B cell (primary cell): ENCODE measurements at regions of chr12 and their contacts with region 1.

Region 1: GRCh38 chr12:59603754-59604153 is 7.9 kb downstream of the SLC16A7 start:
- DNase-seq: peak; percentile 11
- ATAC-seq: no peak
- H3K4me3 ChIP-seq: no peak overlapping the region
- H3K4me3 Mint-ChIP-seq: no peak overlapping the region
- H3K27ac ChIP-seq: no peak overlapping the region
- H3K27ac Mint-ChIP-seq: no peak overlapping the region
- H3K4me1 ChIP-seq: peaks cover 0 to 9% of the 10 kb centered on the region in 2 donors
- H3K4me1 Mint-ChIP-seq: peaks cover 25% of the 10 kb centered on the region
- H3K27me3 ChIP-seq: no peaks in the 10 kb centered on the region
- H3K27me3 Mint-ChIP-seq: no peaks in the 10 kb centered on the region
- CTCF ChIP-seq: no peak

Region 2: GRCh38 chr12:59620326-59620725 is 16.6 kb after region 1 on chr12:
- CTCF ChIA-PET with region 1: no interaction called
- POLR2A ChIA-PET with region 1: no interaction called
- intact Hi-C with region 1: loop called (anchors 2 kb)
- DNase-seq: peak; percentile 51
- ATAC-seq: peak; percentile 72
- H3K4me3 ChIP-seq: peak overlapping the region in 2 of 5 experiments; percentile 15 to 20
- H3K4me3 Mint-ChIP-seq: peak overlapping the region; percentile 69
- H3K27ac ChIP-seq: peak overlapping the region in 1 of 2 donors; percentile 71
- H3K27ac Mint-ChIP-seq: peak overlapping the region; percentile 54
- H3K4me1 ChIP-seq: peaks cover 18 to 23% of the 10 kb centered on the region in 2 donors
- H3K4me1 Mint-ChIP-seq: peaks cover 30% of the 10 kb centered on the region
- H3K27me3 ChIP-seq: no peaks in the 10 kb centered on the region
- H3K27me3 Mint-ChIP-seq: no peaks in the 10 kb centered on the region
- CTCF ChIP-seq: no peak

Region 3: DNA sequence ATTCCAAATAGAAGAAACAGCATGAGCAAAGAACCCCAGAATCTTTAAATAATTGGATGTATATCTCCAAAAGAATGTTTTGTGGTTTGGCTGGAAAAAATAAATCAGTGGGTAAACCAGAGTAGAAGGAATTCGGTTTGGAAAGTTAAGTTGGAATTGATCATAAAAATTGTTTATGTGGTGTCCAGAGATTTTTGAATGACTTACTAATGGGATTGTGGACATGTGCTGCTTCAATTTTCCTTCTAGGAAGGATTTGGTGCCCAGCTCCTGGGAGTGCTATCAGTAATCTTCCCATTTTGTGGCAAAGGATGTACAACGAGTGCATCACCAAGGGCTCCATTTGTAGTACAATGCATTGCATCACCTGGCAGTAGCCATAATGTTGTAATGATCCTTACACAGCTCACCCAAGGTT is 216.8 kb after region 1 on chr12:
- CTCF ChIA-PET with region 1: no interaction called
- POLR2A ChIA-PET with region 1: no interaction called
- intact Hi-C with region 1: no loop called
- DNase-seq: no peak
- ATAC-seq: no peak
- H3K4me3 ChIP-seq: no peak overlapping the region
- H3K4me3 Mint-ChIP-seq: no peak overlapping the region
- H3K27ac ChIP-seq: no peak overlapping the region
- H3K27ac Mint-ChIP-seq: no peak overlapping the region
- H3K4me1 ChIP-seq: no peaks in the 10 kb centered on the region
- H3K4me1 Mint-ChIP-seq: no peaks in the 10 kb centered on the region
- H3K27me3 ChIP-seq: no peaks in the 10 kb centered on the region
- H3K27me3 Mint-ChIP-seq: no peaks in the 10 kb centered on the region
- CTCF ChIP-seq: no peak